ENCODE measurements at regions of chr4 and their contacts with region 1.

Region 1: DNA sequence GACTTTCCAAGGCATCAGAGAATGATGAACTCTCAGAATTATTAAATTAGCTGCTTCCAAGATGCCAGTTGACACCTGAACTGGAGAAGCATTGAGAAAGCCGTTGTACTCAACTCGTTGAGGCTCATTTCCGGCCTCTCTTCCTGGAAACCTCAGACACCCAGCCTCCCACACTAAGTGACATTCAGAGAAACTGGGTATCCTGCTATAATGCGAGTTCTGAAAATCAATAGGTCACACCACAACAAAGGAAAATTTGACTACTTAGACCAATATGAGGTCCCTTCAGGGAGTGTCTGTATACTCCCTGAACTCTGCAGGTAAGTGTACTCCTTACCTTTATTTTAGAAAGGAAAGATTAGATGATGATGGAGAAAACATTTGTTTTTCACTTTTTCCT is 51.2 kb downstream of the ENPEP start:
- DNase-seq: peak; percentile 10

Region 2: GRCh38 chr4:110005461-110006056 is 521.6 kb before region 1 on chr4:
- in situ Hi-C with region 1: loop called (anchors 10 kb)
- DNase-seq: peak; percentile 60

Region 3: GRCh38 chr4:110119337-110119736 is 407.8 kb before region 1 on chr4:
- in situ Hi-C with region 1: no loop called
- DNase-seq: no peak

Region 4: DNA sequence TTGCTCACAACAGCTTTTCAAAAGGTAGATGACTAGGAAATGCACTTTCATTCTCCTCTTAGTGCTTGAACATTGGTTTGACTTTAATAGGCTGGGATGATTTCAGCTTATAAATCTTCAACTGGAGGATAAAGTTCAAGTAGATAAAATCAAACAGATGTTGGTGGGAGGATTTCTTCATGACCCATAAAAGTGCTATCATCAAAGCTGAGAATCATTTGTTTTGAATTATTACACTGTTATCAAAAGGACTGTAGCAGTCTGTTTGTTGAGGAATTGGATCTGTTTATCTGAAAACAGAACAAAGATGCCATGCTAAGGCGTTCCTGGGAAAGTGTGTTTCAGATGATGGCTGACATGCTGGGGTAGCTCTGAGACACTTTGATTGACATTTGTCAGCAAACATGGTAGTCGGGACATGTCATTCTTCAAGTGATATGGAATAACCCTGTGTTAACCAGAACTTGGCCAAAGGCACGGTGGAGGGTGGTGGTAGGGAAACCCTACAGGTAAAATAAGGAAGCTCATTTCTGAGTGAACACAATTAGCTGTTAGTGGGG is 399.8 kb after region 1 on chr4:
- in situ Hi-C with region 1: no loop called
- DNase-seq: no peak